Calu3 (cell line): ENCODE measurements at regions of chr10 and their contacts with region 1.

Region 1: DNA sequence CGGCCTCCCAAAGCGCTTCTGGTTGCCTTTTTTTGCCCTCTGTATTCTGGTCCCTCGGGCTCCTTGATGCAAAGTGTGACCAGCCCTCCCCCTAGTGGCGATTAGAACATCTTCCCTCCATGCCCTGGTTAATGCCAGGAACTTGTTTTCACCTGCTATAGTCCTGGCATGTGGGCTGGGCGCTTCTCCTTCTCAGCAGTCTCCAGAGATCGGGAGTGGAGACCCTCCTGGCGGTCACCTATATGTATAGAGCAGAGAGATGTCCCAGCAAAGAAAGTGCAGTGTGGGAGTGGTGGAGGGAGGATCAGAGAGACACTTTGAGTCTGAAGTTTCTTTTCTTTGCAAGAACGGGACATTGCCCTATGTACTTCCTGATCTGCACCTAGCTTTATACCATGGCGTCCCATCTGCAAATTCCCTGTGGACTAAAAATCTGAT is 264.1 kb downstream of the OTUD1 start:
- DNase-seq: peak; percentile 74
- H3K4me3 Mint-ChIP-seq: peak overlapping the region; percentile 54
- H3K27ac Mint-ChIP-seq: peak overlapping the region; percentile 5
- H3K4me1 Mint-ChIP-seq: no peaks in the 10 kb centered on the region
- H3K27me3 Mint-ChIP-seq: peaks cover 28% of the 10 kb centered on the region
- CTCF ChIP-seq: peak; percentile 64

Region 2: GRCh38 chr10:23158370-23158769 is 544.6 kb before region 1 on chr10:
- CTCF ChIA-PET with region 1: no interaction called
- intact Hi-C with region 1: loop called (anchors 2 kb)
- DNase-seq: peak; percentile 54
- H3K4me3 Mint-ChIP-seq: no peak overlapping the region
- H3K27ac Mint-ChIP-seq: no peak overlapping the region
- H3K4me1 Mint-ChIP-seq: no peaks in the 10 kb centered on the region
- H3K27me3 Mint-ChIP-seq: peaks cover 47% of the 10 kb centered on the region
- CTCF ChIP-seq: peak; percentile 87

Region 3: GRCh38 chr10:23293145-23293724 is 409.8 kb before region 1 on chr10:
- CTCF ChIA-PET with region 1: interaction called, 3 read pairs
- intact Hi-C with region 1: loop called (anchors 1 kb)
- DNase-seq: peak; percentile 68
- H3K4me3 Mint-ChIP-seq: no peak overlapping the region
- H3K27ac Mint-ChIP-seq: no peak overlapping the region
- H3K4me1 Mint-ChIP-seq: peaks cover 8% of the 10 kb centered on the region
- H3K27me3 Mint-ChIP-seq: no peaks in the 10 kb centered on the region
- CTCF ChIP-seq: peak; percentile 70

Region 4: GRCh38 chr10:23314835-23315239 is 388.2 kb before region 1 on chr10:
- CTCF ChIA-PET with region 1: no interaction called
- intact Hi-C with region 1: loop called (anchors 5 kb)
- DNase-seq: peak; percentile 67
- H3K4me3 Mint-ChIP-seq: no peak overlapping the region
- H3K27ac Mint-ChIP-seq: no peak overlapping the region
- H3K4me1 Mint-ChIP-seq: no peaks in the 10 kb centered on the region
- H3K27me3 Mint-ChIP-seq: no peaks in the 10 kb centered on the region
- CTCF ChIP-seq: peak; percentile 34

Region 5: DNA sequence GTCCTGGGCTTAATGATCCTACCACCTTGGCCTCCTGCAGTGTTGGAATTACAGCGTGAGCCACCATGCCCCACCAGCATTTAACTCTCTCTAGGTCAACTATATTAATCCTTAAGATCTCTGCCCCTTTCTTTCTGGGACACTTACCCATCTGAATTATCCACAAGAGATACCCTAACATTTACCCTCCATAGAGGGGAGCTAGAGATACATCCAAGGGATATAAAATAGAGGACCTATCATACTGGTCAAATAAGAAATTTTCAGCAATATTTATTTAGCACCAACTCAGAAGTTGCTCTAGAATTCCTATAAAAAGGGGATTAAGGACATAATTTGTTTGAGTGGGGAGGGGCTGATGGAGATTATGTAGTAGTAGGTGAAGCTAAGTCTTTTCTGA is 167.6 kb before region 1 on chr10:
- CTCF ChIA-PET with region 1: no interaction called
- intact Hi-C with region 1: loop called (anchors 5 kb)
- DNase-seq: no peak
- H3K4me3 Mint-ChIP-seq: no peak overlapping the region
- H3K27ac Mint-ChIP-seq: no peak overlapping the region
- H3K4me1 Mint-ChIP-seq: no peaks in the 10 kb centered on the region
- H3K27me3 Mint-ChIP-seq: peaks cover 52% of the 10 kb centered on the region
- CTCF ChIP-seq: peak; percentile 21

Region 6: GRCh38 chr10:23918839-23919238 is 215.8 kb after region 1 on chr10:
- CTCF ChIA-PET with region 1: no interaction called
- intact Hi-C with region 1: no loop called
- DNase-seq: no peak
- H3K4me3 Mint-ChIP-seq: no peak overlapping the region
- H3K27ac Mint-ChIP-seq: no peak overlapping the region
- H3K4me1 Mint-ChIP-seq: no peaks in the 10 kb centered on the region
- H3K27me3 Mint-ChIP-seq: peaks cover 28% of the 10 kb centered on the region
- CTCF ChIP-seq: no peak

Region 7: GRCh38 chr10:23951841-23952240 is 248.8 kb after region 1 on chr10:
- CTCF ChIA-PET with region 1: no interaction called
- intact Hi-C with region 1: no loop called
- DNase-seq: no peak
- H3K4me3 Mint-ChIP-seq: no peak overlapping the region
- H3K27ac Mint-ChIP-seq: no peak overlapping the region
- H3K4me1 Mint-ChIP-seq: no peaks in the 10 kb centered on the region
- H3K27me3 Mint-ChIP-seq: no peaks in the 10 kb centered on the region
- CTCF ChIP-seq: no peak